WTC11 (cell line): ENCODE measurements at regions of chr16 and their contacts with region 1.

Region 1: DNA sequence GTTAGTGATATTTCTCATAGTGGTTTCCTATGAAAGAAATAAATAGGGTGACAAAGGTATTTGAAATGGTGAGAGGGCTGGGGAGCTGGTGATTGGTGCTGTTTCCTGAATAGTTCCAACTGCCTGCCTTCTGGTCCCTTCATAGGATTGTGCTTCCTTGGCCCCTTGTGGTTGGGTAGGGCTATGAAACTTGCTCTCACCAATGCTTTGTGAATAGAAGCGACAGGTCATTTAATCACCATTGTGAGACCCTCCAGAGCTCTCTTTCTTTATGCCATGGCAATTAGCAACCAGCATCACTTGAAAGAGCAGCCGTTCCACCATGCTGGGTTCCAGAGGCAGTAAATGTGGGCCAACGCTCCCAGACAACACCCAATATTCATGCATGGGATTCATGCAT is 23.7 kb upstream of the WWOX start:
- DNase-seq: no peak
- ATAC-seq: peak; percentile 23
- H3K4me3 Mint-ChIP-seq: no peak overlapping the region
- H3K27ac Mint-ChIP-seq: no peak overlapping the region
- H3K4me1 Mint-ChIP-seq: peaks cover 17% of the 10 kb centered on the region
- H3K27me3 Mint-ChIP-seq: peaks cover 100% of the 10 kb centered on the region
- CTCF ChIP-seq: no peak

Region 2: DNA sequence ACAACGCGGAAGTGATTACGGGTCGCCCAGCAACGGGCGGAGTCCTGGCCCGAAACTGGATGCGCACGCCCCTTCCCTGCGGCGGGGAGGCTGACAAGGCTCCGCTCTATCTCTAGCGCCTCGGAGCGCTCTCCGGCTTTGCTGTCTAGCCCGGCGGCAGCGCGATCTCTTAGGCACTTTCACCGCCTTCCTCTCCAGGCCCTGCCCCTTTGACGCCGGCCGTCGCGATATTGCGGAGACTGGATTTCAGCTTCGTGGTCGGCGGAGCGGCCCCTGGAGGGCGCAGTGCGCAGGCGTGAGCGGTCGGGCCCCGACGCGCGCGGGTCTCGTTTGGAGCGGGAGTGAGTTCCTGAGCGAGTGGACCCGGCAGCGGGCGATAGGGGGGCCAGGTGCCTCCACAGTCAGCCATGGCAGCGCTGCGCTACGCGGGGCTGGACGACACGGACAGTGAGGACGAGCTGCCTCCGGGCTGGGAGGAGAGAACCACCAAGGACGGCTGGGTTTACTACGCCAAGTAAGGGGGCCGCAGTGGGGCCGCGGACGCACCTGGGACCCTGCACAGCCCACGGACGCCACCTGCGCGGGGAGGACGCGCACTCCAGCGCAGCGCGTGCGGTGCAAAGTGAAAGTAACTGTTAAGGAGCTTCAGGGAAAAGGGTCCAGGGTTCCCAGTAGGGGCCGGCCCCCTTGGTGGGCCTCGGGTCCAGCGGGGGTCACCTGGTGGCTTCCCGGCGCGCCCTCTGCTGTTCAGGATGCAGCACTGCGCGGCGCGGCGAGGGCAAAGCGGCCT is 23.8 kb after region 1 on chr16 and contains the start of gene WWOX:
- CTCF ChIA-PET with region 1: interaction called, 13 read pairs
- POLR2A ChIA-PET with region 1: no interaction called
- DNase-seq: peak; percentile 96
- ATAC-seq: peak; percentile 95
- H3K4me3 Mint-ChIP-seq: peak within 1 kb of the TSS; percentile 72
- H3K27ac Mint-ChIP-seq: peak within 1 kb of the TSS; percentile 93
- H3K4me1 Mint-ChIP-seq: peaks cover 14% of the 10 kb centered on the region
- H3K27me3 Mint-ChIP-seq: peaks cover 40% of the 10 kb centered on the region
- CTCF ChIP-seq: peak; percentile 92
- total RNA-seq, gene WWOX: 15.7 to 20.3 TPM (median 19.0 TPM) in 3 replicates